ENCODE measurements at regions of chr11 and their contacts with region 1.

Region 1: DNA sequence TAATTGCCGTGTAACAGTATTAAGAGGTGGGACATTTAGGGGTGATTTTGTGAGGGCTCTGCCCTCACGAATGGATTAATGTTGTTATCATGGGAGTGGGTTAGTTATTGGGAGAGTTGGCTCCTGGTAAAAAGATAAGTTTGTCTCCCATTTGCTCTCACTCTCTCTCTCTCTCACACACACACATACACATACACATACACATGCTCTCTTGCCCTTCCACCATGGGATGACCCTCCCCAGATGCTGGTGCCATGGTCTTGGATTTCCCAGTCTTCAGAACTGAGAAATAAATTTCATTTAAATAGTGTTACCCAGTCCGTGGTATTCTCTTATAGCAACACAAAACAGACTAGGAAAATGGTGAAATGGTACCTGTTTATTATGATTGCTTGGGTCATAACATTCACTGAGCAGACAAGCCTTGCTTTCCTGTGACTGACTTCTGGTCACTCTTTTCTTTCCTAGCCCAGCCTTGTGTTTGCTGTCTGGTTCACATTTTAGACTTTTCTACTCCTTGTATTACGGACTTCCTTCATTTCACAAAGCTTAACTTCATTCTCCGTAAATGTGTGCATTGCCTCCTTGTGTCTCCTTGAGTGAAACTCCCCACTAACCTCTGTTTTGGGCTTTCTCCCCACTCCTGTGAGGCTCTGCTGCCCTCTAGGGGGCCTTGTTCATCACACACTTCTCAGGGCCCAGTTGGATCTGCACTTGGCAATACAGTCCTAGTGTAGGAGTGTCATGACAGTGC is 206.5 kb upstream of the CTSC start:
- DNase-seq: peak; percentile 76 to 88 (median 86)
- ATAC-seq: peak; percentile 98 to 99
- H3K4me3 ChIP-seq: no peak overlapping the region
- H3K27ac ChIP-seq: no peak overlapping the region
- H3K4me1 ChIP-seq: no peaks in the 10 kb centered on the region
- H3K27me3 ChIP-seq: no peaks in the 10 kb centered on the region

Region 2: DNA sequence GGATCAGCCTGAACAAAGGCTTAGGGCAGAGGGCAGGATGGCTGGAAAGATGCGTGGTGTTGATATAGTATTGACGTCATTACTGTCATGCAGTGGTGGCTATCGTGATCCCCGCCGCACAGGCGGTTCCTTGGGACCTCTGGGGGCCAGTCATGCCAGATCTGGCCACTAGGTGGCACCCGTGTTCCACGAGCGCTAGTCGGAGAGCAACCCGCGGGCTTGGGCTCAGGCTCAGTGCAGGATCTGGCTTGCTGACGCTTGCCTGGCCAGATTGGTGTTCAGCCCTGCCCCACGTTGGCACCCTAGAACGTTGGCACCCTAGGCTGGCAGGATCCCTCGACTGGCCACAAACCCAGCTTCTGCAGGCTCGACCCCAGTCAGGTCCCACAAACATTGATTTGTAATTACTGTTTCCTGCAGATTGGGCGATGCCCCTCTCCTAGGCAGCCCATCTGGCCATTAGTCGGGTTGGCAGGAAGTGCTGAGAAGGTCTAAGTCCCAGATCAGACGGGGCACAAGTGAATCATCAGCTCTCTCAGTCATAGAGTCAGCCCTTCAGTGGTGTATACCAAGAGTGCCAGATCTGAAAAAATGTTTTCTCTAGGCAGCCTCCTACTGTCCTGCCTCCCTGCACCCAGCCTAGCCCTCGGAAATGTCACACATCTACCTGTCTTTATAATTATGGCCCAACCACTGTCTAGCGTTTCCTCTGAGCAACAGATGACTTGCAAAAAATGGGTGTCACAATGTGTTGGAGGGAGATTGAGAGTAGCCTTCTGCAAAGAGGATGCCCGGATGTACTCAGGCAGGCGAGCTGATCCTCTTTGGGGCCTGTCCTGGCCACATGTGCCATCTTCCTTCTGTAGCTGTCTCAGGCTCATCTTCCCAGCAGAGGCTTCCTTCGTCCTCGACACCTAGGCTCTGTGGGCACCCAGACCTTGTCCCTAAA is 1191.0 kb before region 1 on chr11:
- intact Hi-C with region 1: loop called in 2 of 4 experiments (anchors 10 kb)
- DNase-seq: peak; percentile 88 to 94 (median 94)
- ATAC-seq: peak; percentile 90 to 95
- H3K4me3 ChIP-seq: no peak overlapping the region
- H3K27ac ChIP-seq: no peak overlapping the region
- H3K4me1 ChIP-seq: peaks cover 10% of the 10 kb centered on the region
- H3K27me3 ChIP-seq: no peaks in the 10 kb centered on the region

Region 3: DNA sequence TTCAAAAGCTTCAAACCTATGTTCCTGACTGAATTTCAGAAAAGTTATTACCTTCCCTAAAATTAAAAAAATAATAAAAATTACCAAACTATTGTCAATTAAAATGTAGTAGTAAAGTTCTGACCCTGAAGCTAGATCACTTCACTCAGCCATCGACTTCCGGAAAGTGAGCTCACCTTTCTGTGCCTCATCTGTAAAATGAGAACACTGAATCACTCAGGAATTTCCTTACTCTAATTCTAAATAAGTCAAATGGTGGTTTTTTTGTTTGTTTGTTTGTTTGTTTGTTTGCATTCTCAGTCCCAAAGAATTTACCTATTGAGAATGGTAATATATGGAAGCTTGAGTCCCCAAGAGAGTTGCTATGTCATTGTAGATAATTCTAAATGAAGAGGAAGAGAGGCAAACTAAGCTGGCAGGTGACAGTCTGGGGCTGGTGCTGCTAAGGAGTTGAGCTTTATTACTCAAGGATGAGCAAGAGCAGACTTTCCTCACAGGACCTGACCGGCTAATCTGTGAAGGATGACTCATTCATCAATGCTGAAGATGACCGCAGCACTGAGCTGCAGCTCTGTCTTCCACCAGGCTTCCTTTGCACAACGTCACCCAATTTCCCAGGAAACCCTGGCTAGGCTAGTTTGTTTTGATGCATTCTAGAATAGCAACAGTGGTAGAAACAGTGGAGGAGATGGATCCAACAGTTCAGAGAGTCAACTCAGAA is 617.7 kb before region 1 on chr11:
- intact Hi-C with region 1: no loop called
- DNase-seq: no peak
- ATAC-seq: no peak
- H3K4me3 ChIP-seq: no peak overlapping the region
- H3K27ac ChIP-seq: no peak overlapping the region
- H3K4me1 ChIP-seq: no peaks in the 10 kb centered on the region
- H3K27me3 ChIP-seq: no peaks in the 10 kb centered on the region

Region 4: DNA sequence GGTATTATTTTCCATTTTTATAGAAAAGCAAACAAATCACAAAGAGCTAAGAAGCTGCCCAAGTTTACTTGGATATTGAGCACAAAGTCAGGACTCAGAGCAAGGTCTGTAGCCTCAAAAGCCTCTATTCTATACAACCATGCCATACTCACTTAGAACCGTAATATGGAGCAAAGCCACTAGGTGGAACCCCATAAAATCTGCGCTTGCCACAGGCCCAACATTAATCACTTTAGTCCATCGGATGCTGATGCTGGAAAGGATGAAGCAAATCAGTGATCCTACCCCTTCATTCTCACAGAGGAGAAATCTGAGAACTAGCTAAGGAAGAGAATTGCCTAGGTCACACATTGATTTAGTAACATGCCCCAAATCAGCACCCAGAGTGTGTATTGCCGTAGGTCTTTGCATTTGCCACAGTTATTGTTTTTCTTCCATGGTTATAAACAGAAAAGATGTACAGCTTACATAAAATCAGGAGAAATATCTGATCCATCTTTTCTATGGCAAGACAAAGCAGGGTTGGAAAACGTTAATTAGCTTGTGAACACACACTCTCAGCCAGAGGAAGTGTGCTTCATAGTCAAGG is 312.1 kb before region 1 on chr11:
- intact Hi-C with region 1: loop called in 2 of 4 experiments (anchors 5 kb)
- DNase-seq: no peak
- ATAC-seq: peak in 1 of 2 donors; percentile 61
- H3K4me3 ChIP-seq: no peak overlapping the region
- H3K27ac ChIP-seq: no peak overlapping the region
- H3K4me1 ChIP-seq: no peaks in the 10 kb centered on the region
- H3K27me3 ChIP-seq: no peaks in the 10 kb centered on the region